Heart left ventricle (tissue), 16 donors: ENCODE measurements at regions of chr2 and their contacts with region 1.

Region 1: GRCh38 chr2:28751252-28751955 is at the start of gene PPP1CB:
- DNase-seq: peak; percentile 97 to 98 (median 98)
- ATAC-seq: peak; percentile 88 to 97 (median 92)
- H3K4me3 ChIP-seq: peak within 1 kb of the TSS; percentile 90 to 100 (median 94)
- H3K27ac ChIP-seq: peak within 1 kb of the TSS; percentile 98 to 100 (median 100)
- H3K4me1 ChIP-seq: peaks cover 7 to 59% (median 36%) of the 10 kb centered on the region in 12 donors
- H3K27me3 ChIP-seq: no peaks in the 10 kb centered on the region
- CTCF ChIP-seq: peak in 11 of 12 donors; percentile 12 to 55 (median 29)
- POLR2A ChIP-seq: peak in 1 of 2 donors; percentile 89
- total RNA-seq, gene PPP1CB: 204 to 496 (median 427) TPM

Region 2: GRCh38 chr2:28594289-28595108 is 156.9 kb before region 1 on chr2:
- intact Hi-C with region 1: loop called (anchors 1 to 2 kb)
- DNase-seq: peak; percentile 85 to 93 (median 90)
- ATAC-seq: peak; percentile 78 to 92 (median 86)
- H3K4me3 ChIP-seq: peak overlapping the region in 6 of 12 donors; percentile 19 to 36 (median 27)
- H3K27ac ChIP-seq: peak overlapping the region; percentile 75 to 93 (median 88)
- H3K4me1 ChIP-seq: peaks cover 0 to 42% (median 18%) of the 10 kb centered on the region in 12 donors
- H3K27me3 ChIP-seq: no peaks in the 10 kb centered on the region
- CTCF ChIP-seq: peak; percentile 79 to 92 (median 87)
- POLR2A ChIP-seq: peak in 1 of 2 donors; percentile 33

Region 3: GRCh38 chr2:28621172-28622100 is 130.0 kb before region 1 on chr2:
- intact Hi-C with region 1: loop called in 6 of 10 experiments (anchors 10 kb)
- DNase-seq: peak; percentile 60 to 76 (median 69)
- ATAC-seq: peak; percentile 80 to 93 (median 84)
- H3K4me3 ChIP-seq: peak overlapping the region in 1 of 12 donors; percentile 12
- H3K27ac ChIP-seq: peak overlapping the region; percentile 49 to 93 (median 72)
- H3K4me1 ChIP-seq: peaks cover 0 to 56% (median 40%) of the 10 kb centered on the region in 12 donors
- H3K27me3 ChIP-seq: no peaks in the 10 kb centered on the region
- CTCF ChIP-seq: peak in 9 of 12 donors; percentile 17 to 43 (median 24)
- POLR2A ChIP-seq: no peak

Region 4: GRCh38 chr2:28670866-28671265 is 80.5 kb before region 1 on chr2:
- intact Hi-C with region 1: no loop called
- DNase-seq: no peak
- ATAC-seq: no peak
- H3K4me3 ChIP-seq: no peak overlapping the region
- H3K27ac ChIP-seq: no peak overlapping the region
- H3K4me1 ChIP-seq: no peaks in the 10 kb centered on the region
- H3K27me3 ChIP-seq: no peaks in the 10 kb centered on the region
- CTCF ChIP-seq: no peak
- POLR2A ChIP-seq: no peak

Region 5: DNA sequence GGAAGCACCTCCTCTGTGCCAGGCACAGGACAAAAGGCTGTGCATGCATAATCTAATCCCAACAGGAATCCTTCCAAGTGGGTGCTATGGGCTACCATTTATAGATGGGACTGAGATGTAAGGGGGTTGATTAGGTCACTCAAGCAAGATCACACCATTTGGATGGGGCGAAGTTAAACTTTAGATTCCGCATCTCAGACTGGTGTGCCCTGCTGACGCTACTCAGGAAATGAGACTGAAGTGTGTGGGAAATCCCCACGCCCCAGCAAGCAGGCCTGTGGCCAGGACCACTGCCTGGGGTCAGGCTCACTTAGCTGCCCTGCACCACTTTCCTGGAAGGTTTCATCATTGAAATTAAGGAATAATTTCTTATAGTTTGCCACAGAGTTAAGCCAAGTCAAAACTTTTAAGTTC is 70.2 kb before region 1 on chr2:
- intact Hi-C with region 1: loop called in 7 of 10 experiments (anchors 2 to 5 kb)
- DNase-seq: peak in 2 of 5 donors; percentile 42 to 46
- ATAC-seq: peak in 1 of 4 donors; percentile 52
- H3K4me3 ChIP-seq: no peak overlapping the region
- H3K27ac ChIP-seq: peak overlapping the region in 10 of 12 donors; percentile 8 to 83 (median 74)
- H3K4me1 ChIP-seq: peaks cover 14 to 74% (median 52%) of the 10 kb centered on the region in 12 donors
- H3K27me3 ChIP-seq: no peaks in the 10 kb centered on the region
- CTCF ChIP-seq: no peak
- POLR2A ChIP-seq: no peak

Region 6: GRCh38 chr2:28709101-28709500 is 42.3 kb before region 1 on chr2:
- intact Hi-C with region 1: loop called in 1 of 10 experiments (anchors 5 kb)
- DNase-seq: no peak
- ATAC-seq: no peak
- H3K4me3 ChIP-seq: no peak overlapping the region
- H3K27ac ChIP-seq: no peak overlapping the region
- H3K4me1 ChIP-seq: peaks cover 0 to 12% (median 2%) of the 10 kb centered on the region in 12 donors
- H3K27me3 ChIP-seq: no peaks in the 10 kb centered on the region
- CTCF ChIP-seq: no peak
- POLR2A ChIP-seq: no peak

Region 7: GRCh38 chr2:28801726-28802487 is 50.5 kb after region 1 on chr2:
- intact Hi-C with region 1: no loop called
- DNase-seq: no peak
- ATAC-seq: no peak
- H3K4me3 ChIP-seq: no peak overlapping the region
- H3K27ac ChIP-seq: no peak overlapping the region
- H3K4me1 ChIP-seq: peaks cover 0 to 9% (median under 1%) of the 10 kb centered on the region in 12 donors
- H3K27me3 ChIP-seq: no peaks in the 10 kb centered on the region
- CTCF ChIP-seq: no peak
- POLR2A ChIP-seq: no peak

Region 8: DNA sequence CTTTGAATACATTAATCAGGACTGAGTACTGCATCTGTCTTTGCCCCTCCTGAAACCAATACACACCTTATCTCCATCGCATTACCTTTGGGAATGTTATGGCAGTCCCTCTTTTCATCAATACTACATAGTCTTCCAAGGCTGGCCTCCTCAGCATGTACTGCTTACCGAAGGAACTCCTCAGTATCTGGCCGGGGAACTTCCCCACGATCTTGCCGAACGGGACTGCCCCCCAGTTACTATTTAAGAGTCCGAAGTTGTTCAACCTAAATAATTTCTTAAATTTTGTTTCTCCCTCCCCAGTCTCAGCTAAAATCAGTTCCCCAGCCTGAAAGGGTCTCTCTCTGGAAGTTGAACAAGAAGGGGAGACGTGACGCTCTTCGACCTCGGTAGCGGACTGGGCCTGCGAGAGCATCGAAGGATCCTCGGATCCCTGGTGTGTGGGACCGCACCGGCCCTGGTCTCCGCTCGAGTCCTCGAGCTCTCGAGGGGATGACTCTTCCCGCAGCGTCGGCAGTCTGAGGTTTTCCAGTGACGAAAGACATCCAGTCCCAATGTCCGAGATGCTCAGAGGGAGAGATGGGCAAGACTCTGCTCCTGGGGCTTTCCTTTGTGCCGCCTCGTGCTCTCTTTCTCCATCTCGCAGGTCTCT is 118.2 kb after region 1 on chr2:
- intact Hi-C with region 1: no loop called
- DNase-seq: no peak
- ATAC-seq: peak in 3 of 4 donors; percentile 29 to 46 (median 34)
- H3K4me3 ChIP-seq: peak overlapping the region; percentile 73 to 99 (median 86)
- H3K27ac ChIP-seq: peak overlapping the region in 11 of 12 donors; percentile 71 to 88 (median 78)
- H3K4me1 ChIP-seq: peaks cover 0 to 42% (median 20%) of the 10 kb centered on the region in 12 donors
- H3K27me3 ChIP-seq: no peaks in the 10 kb centered on the region
- CTCF ChIP-seq: no peak
- POLR2A ChIP-seq: no peak

Region 9: DNA sequence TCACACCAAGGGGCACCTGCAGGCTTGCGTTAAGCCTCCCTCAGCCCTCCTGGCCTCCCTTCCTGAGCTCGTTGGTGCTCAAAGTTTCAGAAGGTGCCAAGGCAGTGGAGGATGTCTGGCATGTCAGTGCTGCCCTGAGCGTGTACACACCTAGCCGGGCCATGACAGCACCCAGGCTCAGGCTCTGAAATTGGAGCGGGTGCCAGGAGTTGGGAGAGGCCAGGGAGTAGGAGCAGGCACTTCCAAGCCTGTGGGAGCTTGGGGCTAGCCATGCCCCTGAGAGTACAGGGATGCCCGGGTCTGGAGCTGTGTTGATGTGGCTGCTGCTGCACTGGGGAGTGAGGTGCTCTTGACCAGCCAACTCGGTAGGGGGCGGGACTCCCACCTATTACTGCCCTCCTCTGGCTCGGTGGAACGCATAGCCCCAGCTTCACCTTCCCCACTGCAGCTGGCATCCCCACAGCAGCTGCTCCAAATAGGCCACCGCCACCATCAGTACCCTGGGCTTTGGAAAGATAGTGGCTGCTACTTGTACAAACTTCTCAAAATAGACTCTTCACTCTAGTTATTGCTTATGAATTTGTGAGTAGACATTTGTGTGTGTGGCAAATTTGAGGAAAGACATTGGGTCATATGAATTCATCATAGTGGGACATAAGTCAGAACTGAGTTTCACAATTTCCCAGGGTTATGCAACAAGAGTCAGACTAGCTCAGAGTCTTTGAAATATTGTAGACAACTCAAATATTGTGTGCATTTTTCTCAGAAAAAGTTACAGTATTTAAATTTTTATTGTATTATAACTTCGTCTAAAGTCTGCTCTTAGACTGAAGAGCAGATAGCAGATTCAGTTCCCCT is 329.7 kb after region 1 on chr2:
- intact Hi-C with region 1: no loop called
- DNase-seq: no peak
- ATAC-seq: no peak
- H3K4me3 ChIP-seq: no peak overlapping the region
- H3K27ac ChIP-seq: no peak overlapping the region
- H3K4me1 ChIP-seq: peaks cover 0 to 3% (median 0%) of the 10 kb centered on the region in 12 donors
- H3K27me3 ChIP-seq: no peaks in the 10 kb centered on the region
- CTCF ChIP-seq: no peak
- POLR2A ChIP-seq: no peak